Natural killer cell (primary cell): ENCODE measurements at regions of chr4 and their contacts with region 1.

Region 1: DNA sequence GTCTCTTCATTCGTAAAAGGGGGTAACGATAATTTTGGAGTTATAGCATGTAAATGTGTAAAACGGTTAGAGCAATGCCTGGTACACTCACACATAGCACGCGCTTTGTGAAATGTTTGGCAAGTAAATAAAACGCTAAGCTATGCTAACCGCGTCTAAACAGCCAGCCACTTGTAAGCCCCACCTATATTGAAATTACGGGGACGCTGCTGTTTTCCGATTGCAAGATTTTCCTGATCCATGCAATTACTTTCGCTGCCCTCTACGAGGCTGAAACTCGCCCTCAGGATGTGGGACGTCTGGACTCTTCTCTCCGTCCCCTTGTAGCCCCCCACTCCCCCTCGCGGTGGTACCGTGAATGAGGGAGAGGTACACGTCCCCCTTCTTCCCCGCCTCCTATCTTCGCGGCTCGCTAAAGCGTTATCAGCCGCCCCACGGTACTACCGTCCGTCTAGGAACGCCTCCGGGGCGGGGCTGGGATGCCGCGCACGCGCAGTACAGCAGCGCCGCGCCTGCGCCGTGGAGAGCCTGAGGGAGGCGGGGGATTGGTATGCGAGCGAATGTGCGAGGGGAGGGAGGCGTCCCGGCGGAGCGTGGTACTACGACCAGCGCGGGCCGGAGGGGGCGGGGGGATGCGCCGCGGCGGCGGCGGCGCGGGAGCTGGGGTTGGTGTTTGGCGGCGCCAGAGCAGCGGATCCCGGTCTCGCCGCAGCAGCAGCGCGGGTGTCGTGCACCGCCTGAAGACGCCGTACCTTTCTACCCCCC is at the start of gene STIM2:
- DNase-seq: peak; percentile 99
- ATAC-seq: peak; percentile 65 to 86 (median 72)
- H3K4me3 ChIP-seq: peak within 1 kb of the TSS; percentile 67
- H3K4me3 Mint-ChIP-seq: peak within 1 kb of the TSS; percentile 100
- H3K27ac ChIP-seq: peak within 1 kb of the TSS; percentile 84
- H3K27ac Mint-ChIP-seq: peak within 1 kb of the TSS; percentile 95 to 98
- H3K4me1 ChIP-seq: peaks cover 18% of the 10 kb centered on the region
- H3K4me1 Mint-ChIP-seq: peaks cover 69 to 71% of the 10 kb centered on the region in 2 donors
- H3K27me3 ChIP-seq: no peaks in the 10 kb centered on the region
- H3K27me3 Mint-ChIP-seq: no peaks in the 10 kb centered on the region
- CTCF ChIP-seq: peak; percentile 10
- total RNA-seq, gene STIM2: 98.3 to 104 (median 100) TPM

Region 2: DNA sequence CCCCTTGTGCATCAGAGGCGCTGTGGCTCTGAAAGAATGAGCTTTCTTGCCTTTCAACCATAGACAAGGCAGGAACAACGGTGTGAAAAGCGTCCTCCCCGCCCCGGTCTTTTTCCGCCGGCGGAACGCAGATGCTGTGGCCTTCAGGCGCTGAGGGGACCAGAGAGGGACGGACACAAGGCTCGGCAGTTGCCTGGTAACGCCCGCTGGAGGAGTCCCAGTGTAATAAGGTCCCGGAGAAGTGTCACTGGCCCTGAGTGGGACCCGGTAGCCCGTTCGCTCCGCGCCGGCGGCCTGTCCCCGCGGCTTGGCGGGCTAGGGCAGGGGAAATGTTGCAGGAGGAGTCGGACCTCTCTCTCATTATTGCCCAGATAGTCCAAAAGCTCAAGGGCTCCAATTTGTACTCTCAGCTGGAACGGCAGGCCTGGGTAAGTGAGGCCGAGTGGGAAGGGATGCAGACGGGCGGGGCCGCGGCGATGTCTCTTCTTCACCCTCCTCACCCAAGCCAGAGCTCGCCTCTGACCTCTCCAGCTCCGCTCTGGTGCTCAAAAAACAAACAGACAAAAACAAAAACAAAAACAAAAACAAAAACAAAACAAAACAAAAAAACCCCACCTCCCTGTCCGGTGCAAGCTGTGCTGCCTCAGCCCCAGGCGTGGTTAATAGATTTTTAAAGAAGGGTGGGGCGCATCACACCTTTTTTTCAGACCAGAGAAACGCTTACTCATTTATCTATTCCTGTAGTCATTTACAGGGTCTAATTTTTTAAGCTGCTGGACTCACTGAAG is 276.3 kb before region 1 on chr4 and contains the start of gene TBC1D19:
- intact Hi-C with region 1: loop called (anchors 5 kb)
- DNase-seq: peak; percentile 81 to 93
- ATAC-seq: peak; percentile 90 to 97 (median 94)
- H3K4me3 ChIP-seq: peak within 1 kb of the TSS; percentile 86
- H3K4me3 Mint-ChIP-seq: peak within 1 kb of the TSS; percentile 98
- H3K27ac ChIP-seq: peak within 1 kb of the TSS; percentile 94
- H3K27ac Mint-ChIP-seq: peak within 1 kb of the TSS; percentile 90 to 97
- H3K4me1 ChIP-seq: peaks cover 7% of the 10 kb centered on the region
- H3K4me1 Mint-ChIP-seq: peaks cover 30 to 39% of the 10 kb centered on the region in 2 donors
- H3K27me3 ChIP-seq: no peaks in the 10 kb centered on the region
- H3K27me3 Mint-ChIP-seq: no peaks in the 10 kb centered on the region
- CTCF ChIP-seq: no peak
- total RNA-seq, gene TBC1D19: 13.0 to 21.3 (median 16.8) TPM

Region 3: GRCh38 chr4:26873391-26874026 is 13.2 kb after region 1 on chr4:
- intact Hi-C with region 1: loop called (anchors 1 kb)
- DNase-seq: peak; percentile 71 to 90
- ATAC-seq: peak; percentile 84 to 95 (median 94)
- H3K4me3 ChIP-seq: no peak overlapping the region
- H3K4me3 Mint-ChIP-seq: peak overlapping the region; percentile 85
- H3K27ac ChIP-seq: peak overlapping the region; percentile 93
- H3K27ac Mint-ChIP-seq: peak overlapping the region; percentile 96 to 98
- H3K4me1 ChIP-seq: peaks cover 39% of the 10 kb centered on the region
- H3K4me1 Mint-ChIP-seq: peaks cover 77 to 82% of the 10 kb centered on the region in 2 donors
- H3K27me3 ChIP-seq: no peaks in the 10 kb centered on the region
- H3K27me3 Mint-ChIP-seq: no peaks in the 10 kb centered on the region
- CTCF ChIP-seq: no peak

Region 4: DNA sequence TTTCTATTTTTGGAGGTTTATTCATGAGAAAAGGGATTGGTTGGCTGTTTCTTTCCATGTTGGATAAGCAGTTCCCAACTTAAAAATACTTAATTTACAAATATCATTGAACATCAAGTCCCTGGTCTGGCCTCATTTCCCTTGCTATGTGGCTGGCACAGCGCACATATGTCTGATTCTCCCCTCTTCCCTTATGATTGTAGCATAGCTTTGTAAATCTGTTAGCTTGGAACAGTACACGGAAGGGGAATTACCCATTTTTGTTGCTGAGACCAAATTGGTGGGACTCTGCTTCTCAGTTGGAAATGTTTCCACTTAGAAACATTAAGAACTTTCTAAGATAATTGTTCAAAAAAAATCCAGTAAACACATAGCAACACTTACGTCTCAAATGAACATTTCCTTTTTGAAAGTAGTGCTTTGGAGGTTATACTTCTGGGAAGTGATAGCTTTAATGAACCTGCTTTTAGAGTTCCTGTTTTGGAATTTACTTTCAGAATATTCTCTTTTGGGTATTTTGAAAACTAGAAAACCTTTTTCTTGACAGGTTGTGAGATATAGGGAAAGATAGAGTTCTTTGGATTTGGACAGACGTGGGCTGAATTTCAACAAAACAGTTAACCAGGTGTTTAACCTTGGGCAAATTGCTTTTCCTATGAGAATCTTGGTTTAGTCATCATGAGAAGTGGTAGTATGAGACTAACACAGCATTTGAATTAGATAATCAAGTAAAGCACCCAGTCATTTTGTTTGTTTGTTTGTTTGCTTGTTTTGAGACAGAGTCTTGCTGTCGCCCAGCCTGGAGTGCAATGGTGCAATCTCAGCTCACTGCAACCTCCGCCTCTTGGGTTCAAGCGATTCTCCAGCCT is 47.6 kb after region 1 on chr4:
- intact Hi-C with region 1: loop called (anchors 5 kb)
- DNase-seq: no peak
- ATAC-seq: no peak
- H3K4me3 ChIP-seq: no peak overlapping the region
- H3K4me3 Mint-ChIP-seq: no peak overlapping the region
- H3K27ac ChIP-seq: no peak overlapping the region
- H3K27ac Mint-ChIP-seq: peak overlapping the region; percentile 12 to 41
- H3K4me1 ChIP-seq: peaks cover 34% of the 10 kb centered on the region
- H3K4me1 Mint-ChIP-seq: peaks cover 69 to 79% of the 10 kb centered on the region in 2 donors
- H3K27me3 ChIP-seq: no peaks in the 10 kb centered on the region
- H3K27me3 Mint-ChIP-seq: no peaks in the 10 kb centered on the region
- CTCF ChIP-seq: no peak